Activated CD4-positive, alpha-beta T cell treated with anti-CD3 and anti-CD28 coated beads, Interleukin-2, amount 10 ng/mL, durations not matched to agents 7 days and 5 days (primary cell): ENCODE measurements at regions of chr4 and their contacts with region 1.

Region 1: GRCh38 chr4:155953151-155954114 is at the start of gene CTSO:
- DNase-seq: peak; percentile 79
- H3K4me3 Mint-ChIP-seq: peak within 1 kb of the TSS; percentile 98
- H3K27ac Mint-ChIP-seq: peak within 1 kb of the TSS; percentile 100
- H3K4me1 Mint-ChIP-seq: peaks cover 17% of the 10 kb centered on the region
- H3K27me3 Mint-ChIP-seq: peaks cover 7% of the 10 kb centered on the region
- total RNA-seq, gene CTSO: 5.5 to 6.2 TPM

Region 2: DNA sequence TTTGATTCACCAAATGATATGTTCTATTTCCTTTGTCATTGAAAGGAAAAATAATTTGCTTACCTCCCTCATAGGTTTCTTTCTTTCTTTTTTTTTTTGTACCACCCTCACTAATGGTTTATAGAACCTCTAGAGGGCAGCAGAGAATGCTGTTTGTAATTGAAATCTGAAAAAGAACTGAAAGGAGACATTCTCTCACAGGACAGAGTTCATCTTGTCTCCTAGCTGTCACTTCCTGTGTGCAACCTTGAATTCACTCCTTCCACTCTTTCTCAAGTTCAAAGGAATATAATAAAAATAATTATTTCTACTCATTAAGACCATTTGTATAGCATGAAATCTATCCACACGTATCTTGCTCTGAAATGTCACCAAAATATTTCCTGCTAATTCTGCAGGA is 143.6 kb before region 1 on chr4:
- CTCF ChIA-PET with region 1: no interaction called
- POLR2A ChIA-PET with region 1: interaction called, 10 read pairs
- DNase-seq: peak; percentile 30
- H3K4me3 Mint-ChIP-seq: no peak overlapping the region
- H3K27ac Mint-ChIP-seq: no peak overlapping the region
- H3K4me1 Mint-ChIP-seq: no peaks in the 10 kb centered on the region
- H3K27me3 Mint-ChIP-seq: no peaks in the 10 kb centered on the region

Region 3: DNA sequence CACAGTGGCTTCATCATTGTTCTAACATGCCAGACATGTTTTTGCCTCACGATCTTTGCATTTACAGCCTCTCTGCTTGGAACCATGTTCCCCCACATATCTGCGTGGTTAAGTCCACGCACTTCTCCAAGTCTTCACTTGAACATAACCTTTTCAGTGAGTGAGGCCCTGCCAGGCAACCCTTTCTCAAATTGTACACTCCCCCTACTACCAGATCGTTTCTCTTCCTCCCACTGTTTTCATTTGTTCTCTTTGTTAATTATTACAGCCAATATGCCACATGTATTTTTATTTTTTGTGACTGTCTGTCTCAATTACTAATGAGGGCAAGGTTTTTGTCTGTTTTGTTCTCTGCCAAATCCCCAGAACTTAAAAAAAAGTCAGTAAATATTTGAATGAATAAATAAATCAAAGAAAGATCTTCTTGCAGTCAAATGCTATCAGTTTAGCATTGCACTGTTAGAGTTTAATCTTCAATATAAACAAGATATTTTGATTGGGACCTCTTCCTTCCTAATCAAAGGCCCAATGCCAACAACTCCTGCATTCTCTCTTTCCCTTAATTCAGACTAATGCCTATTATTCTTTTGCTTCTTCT is 17.9 kb before region 1 on chr4:
- CTCF ChIA-PET with region 1: no interaction called
- POLR2A ChIA-PET with region 1: no interaction called
- DNase-seq: no peak
- H3K4me3 Mint-ChIP-seq: no peak overlapping the region
- H3K27ac Mint-ChIP-seq: no peak overlapping the region
- H3K4me1 Mint-ChIP-seq: no peaks in the 10 kb centered on the region
- H3K27me3 Mint-ChIP-seq: no peaks in the 10 kb centered on the region